ENCODE measurements at regions of chr4 and their contacts with region 1.

Region 1: GRCh38 chr4:189802884-189803283 is 137.8 kb upstream of the FRG1 start:
- DNase-seq: no peak
- ATAC-seq: no peak
- H3K4me3 ChIP-seq: no peak overlapping the region
- H3K27ac ChIP-seq: no peak overlapping the region
- H3K4me1 ChIP-seq: peaks cover 0 to 6% (median 0%) of the 10 kb centered on the region in 12 donors
- H3K27me3 ChIP-seq: no peaks in the 10 kb centered on the region
- CTCF ChIP-seq: no peak
- POLR2A ChIP-seq: no peak

Region 2: GRCh38 chr4:189912170-189912569 is 109.3 kb after region 1 on chr4:
- intact Hi-C with region 1: loop called in 1 of 10 experiments (anchors 10 kb)
- DNase-seq: no peak
- ATAC-seq: no peak
- H3K4me3 ChIP-seq: no peak overlapping the region
- H3K27ac ChIP-seq: no peak overlapping the region
- H3K4me1 ChIP-seq: no peaks in the 10 kb centered on the region
- H3K27me3 ChIP-seq: no peaks in the 10 kb centered on the region
- CTCF ChIP-seq: peak in 7 of 12 donors; percentile 11 to 38 (median 34)
- POLR2A ChIP-seq: no peak